B cell (primary cell): ENCODE measurements at regions of chr1 and their contacts with region 1.

Region 1: GRCh38 chr1:66350001-66350547 is 183.9 kb upstream of the SGIP1 start:
- DNase-seq: peak; percentile 82
- ATAC-seq: peak; percentile 78
- H3K4me3 ChIP-seq: peak overlapping the region in 2 of 5 experiments; percentile 4 to 31
- H3K4me3 Mint-ChIP-seq: peak overlapping the region; percentile 88
- H3K27ac ChIP-seq: peak overlapping the region; percentile 74 to 87
- H3K27ac Mint-ChIP-seq: peak overlapping the region; percentile 84
- H3K4me1 ChIP-seq: peaks cover 74 to 94% of the 10 kb centered on the region in 2 donors
- H3K4me1 Mint-ChIP-seq: peaks cover 95% of the 10 kb centered on the region
- H3K27me3 ChIP-seq: no peaks in the 10 kb centered on the region
- H3K27me3 Mint-ChIP-seq: no peaks in the 10 kb centered on the region
- CTCF ChIP-seq: no peak

Region 2: DNA sequence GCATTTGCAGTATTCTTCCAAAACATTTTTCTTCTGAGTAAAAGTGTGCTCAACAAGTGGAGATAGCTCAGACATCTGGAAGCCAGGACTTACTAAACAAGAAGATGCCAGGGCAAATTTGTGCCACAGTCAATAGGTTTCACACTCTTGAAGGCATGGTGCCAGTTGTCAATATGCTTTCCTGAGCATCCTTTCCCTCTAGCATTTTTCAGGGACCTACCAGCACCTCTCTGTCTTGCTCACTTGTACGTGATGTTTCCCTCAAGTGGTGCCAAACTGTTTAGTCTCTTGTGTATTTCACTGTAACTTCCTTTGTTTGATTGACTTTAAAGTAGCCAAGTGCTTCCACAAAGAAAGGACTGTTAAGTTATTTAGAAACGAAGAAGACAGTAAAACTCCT is 10.1 kb before region 1 on chr1:
- CTCF ChIA-PET with region 1: interaction called, 15 read pairs
- POLR2A ChIA-PET with region 1: interaction called, 4 read pairs
- intact Hi-C with region 1: loop called (anchors 1 kb)
- DNase-seq: peak; percentile 50
- ATAC-seq: no peak
- H3K4me3 ChIP-seq: peak overlapping the region in 3 of 5 experiments; percentile 22 to 27 (median 27)
- H3K4me3 Mint-ChIP-seq: peak overlapping the region; percentile 82
- H3K27ac ChIP-seq: peak overlapping the region; percentile 53 to 94
- H3K27ac Mint-ChIP-seq: peak overlapping the region; percentile 67
- H3K4me1 ChIP-seq: peaks cover 77 to 78% of the 10 kb centered on the region in 2 donors
- H3K4me1 Mint-ChIP-seq: peaks cover 77% of the 10 kb centered on the region
- H3K27me3 ChIP-seq: no peaks in the 10 kb centered on the region
- H3K27me3 Mint-ChIP-seq: no peaks in the 10 kb centered on the region
- CTCF ChIP-seq: no peak

Region 3: DNA sequence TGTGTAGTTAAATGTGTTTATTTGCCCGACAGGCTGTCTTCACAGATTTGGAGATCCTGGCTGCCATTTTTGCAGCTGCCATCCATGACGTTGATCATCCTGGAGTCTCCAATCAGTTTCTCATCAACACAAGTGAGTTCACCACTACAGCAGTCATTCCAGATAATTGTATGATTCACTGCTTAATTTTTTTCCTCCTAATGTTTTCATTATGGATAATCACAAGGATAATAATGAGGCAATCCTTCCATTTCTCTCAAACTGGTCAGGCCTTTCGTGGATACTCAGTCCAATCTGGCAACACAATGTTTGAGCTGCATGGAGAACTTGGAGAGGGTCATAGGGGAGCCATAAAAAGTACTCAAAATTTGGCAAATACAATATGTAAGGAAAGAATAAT is 15.6 kb after region 1 on chr1:
- CTCF ChIA-PET with region 1: interaction called, 14 read pairs
- POLR2A ChIA-PET with region 1: no interaction called
- intact Hi-C with region 1: loop called (anchors 2 kb)
- DNase-seq: no peak
- ATAC-seq: no peak
- H3K4me3 ChIP-seq: no peak overlapping the region
- H3K4me3 Mint-ChIP-seq: no peak overlapping the region
- H3K27ac ChIP-seq: peak overlapping the region in 1 of 2 donors; percentile 81
- H3K27ac Mint-ChIP-seq: peak overlapping the region; percentile 57
- H3K4me1 ChIP-seq: peaks cover 33 to 34% of the 10 kb centered on the region in 2 donors
- H3K4me1 Mint-ChIP-seq: peaks cover 80% of the 10 kb centered on the region
- H3K27me3 ChIP-seq: no peaks in the 10 kb centered on the region
- H3K27me3 Mint-ChIP-seq: no peaks in the 10 kb centered on the region
- CTCF ChIP-seq: no peak